Posterior cingulate gyrus (tissue), 11 donors: ENCODE measurements at regions of chr2 and their contacts with region 1.

Region 1: GRCh38 chr2:197515739-197516392 is at the start of gene MOB4:
- DNase-seq: peak; percentile 92 to 99 (median 95)

Region 2: GRCh38 chr2:197499594-197500526 is 16.0 kb before region 1 on chr2 and contains the starts of genes HSPD1 and HSPE1:
- intact Hi-C with region 1: loop called (anchors 1 kb)
- DNase-seq: peak; percentile 93 to 100 (median 98)

Region 3: GRCh38 chr2:197628043-197628500 is 112.2 kb after region 1 on chr2:
- intact Hi-C with region 1: loop called (anchors 5 kb)
- DNase-seq: peak in 7 of 10 donors; percentile 22 to 87 (median 29)

Region 4: DNA sequence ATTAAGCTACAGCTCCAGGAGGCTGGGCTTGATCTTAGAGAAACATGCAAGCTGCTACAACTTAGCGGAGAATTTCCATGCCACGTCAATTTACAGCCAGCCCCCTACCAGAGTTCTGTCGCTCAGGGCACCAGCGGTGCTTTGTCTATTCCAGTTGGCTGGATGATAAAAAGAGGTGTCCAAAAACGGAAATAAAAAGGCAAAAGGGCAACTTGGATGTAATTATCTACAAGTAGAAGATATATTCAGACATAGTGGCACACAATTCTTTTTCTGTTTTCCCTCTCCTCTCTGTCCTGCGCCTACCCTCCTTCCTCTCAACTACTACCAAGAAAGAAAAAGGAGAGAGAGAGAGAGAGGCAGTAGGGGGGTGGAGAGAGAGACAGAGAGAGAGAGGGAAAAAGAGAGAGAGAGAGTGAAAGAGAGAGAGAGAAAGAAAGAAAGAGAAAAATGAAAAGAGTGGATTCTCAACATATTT is 159.9 kb after region 1 on chr2:
- intact Hi-C with region 1: loop called (anchors 10 kb)
- DNase-seq: peak in 5 of 10 donors; percentile 5 to 84 (median 29)

Region 5: DNA sequence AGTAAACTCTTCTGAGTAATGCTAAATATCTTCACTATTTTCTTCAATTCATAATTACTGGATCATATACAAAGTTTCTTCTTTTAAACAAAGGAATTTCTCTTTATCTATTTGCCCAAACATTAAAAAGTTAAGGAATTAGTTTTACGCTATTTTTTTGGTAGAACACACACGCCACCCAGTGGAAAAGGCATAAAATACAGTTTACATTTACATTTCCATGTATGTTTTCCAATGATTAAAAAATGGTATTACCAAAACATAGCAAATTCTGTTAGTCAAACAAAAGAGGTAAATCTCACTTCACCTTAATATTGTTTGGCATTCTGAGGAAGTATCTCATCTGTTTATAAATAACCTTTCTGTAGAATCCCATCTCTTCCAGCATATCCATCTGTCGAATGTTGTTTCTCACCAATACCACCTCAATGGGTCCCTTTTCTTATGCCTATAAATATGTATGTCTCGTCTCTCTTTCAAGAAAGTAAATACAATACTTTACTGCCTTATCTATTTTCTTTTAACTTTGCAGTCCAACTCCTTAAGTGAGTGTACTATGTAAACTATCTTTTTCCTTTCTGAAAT is 262.0 kb after region 1 on chr2:
- intact Hi-C with region 1: loop called (anchors 5 kb)
- DNase-seq: no peak